ENCODE measurements at regions of chrX and their contacts with region 1.

Region 1: GRCh38 chrX:129115104-129115503 is 408.2 kb downstream of the SMARCA1 start:
- DNase-seq: peak; percentile 45
- ATAC-seq: peak; percentile 49; the same call in 2 of the 3 replicates
- H3K4me3 ChIP-seq: no peak overlapping the region
- H3K27ac ChIP-seq: no peak overlapping the region
- H3K4me1 ChIP-seq: peaks cover 56% of the 10 kb centered on the region
- H3K27me3 ChIP-seq: no peaks in the 10 kb centered on the region
- CTCF ChIP-seq: peak; percentile 60
- EP300 ChIP-seq: no peak
- POLR2A ChIP-seq: no peak
- RAD21 ChIP-seq: no peak

Region 2: DNA sequence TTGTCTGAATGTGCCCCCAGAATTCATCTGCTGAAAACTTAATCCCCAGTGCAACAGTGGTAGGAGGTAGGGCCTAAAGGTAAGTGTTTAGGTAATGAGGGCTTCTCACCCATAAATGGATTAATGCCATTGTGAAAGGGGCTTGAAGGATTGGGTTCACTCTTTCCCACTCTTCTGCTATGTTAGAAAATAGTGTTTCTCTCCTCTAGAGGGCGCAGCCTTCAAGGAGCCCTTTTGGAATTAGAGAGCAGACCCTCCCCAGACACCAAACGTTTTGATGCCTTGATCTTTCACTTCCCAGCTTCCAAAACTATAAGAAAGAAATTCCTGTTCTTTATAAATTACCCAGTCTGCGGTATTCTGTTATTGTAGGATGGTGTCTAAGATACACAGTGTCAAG is 298.2 kb before region 1 on chrX:
- CTCF ChIA-PET with region 1: no interaction called
- POLR2A ChIA-PET with region 1: no interaction called
- in situ Hi-C with region 1: loop called (anchors 25 kb)
- intact Hi-C with region 1: loop called (anchors 10 kb)
- DNase-seq: peak; percentile 22
- ATAC-seq: peak; percentile 46; the same call in 1 of the 3 replicates
- H3K4me3 ChIP-seq: no peak overlapping the region
- H3K27ac ChIP-seq: no peak overlapping the region
- H3K4me1 ChIP-seq: no peaks in the 10 kb centered on the region; the same call in 1 of the 2 replicates
- H3K27me3 ChIP-seq: no peaks in the 10 kb centered on the region
- CTCF ChIP-seq: peak; percentile 42
- EP300 ChIP-seq: no peak
- POLR2A ChIP-seq: no peak
- RAD21 ChIP-seq: no peak

Region 3: DNA sequence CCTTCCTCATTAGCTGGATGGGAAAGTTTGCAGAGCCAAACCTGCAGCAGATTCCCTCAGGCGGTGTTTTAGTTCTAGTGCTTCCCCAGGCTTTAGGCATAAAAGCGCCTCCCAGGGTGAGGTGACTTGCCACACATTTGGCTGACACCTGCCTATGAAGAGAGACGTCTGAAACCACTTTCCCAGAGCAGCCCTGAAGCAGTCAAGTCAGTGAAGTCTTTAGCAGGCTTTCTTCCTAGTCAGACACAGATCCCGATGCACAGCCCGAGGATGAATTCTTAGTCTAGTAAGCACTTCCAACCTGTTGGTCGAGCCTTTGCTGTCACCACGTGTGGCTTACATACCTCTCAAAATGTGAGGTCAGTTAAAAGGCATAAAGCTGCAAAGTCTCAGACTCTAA is 75.9 kb before region 1 on chrX:
- CTCF ChIA-PET with region 1: no interaction called
- POLR2A ChIA-PET with region 1: no interaction called
- in situ Hi-C with region 1: no loop called
- intact Hi-C with region 1: no loop called
- DNase-seq: no peak
- ATAC-seq: no peak
- H3K4me3 ChIP-seq: no peak overlapping the region
- H3K27ac ChIP-seq: no peak overlapping the region
- H3K4me1 ChIP-seq: peaks cover 7% of the 10 kb centered on the region; the same call in 1 of the 2 replicates
- H3K27me3 ChIP-seq: no peaks in the 10 kb centered on the region
- CTCF ChIP-seq: no peak
- EP300 ChIP-seq: no peak
- POLR2A ChIP-seq: no peak
- RAD21 ChIP-seq: no peak